ENCODE measurements at regions of chr2 and their contacts with region 1.

Region 1: GRCh38 chr2:69559442-69560146 is 83.9 kb downstream of the AAK1 start:
- DNase-seq: no peak
- H3K4me3 Mint-ChIP-seq: no peak overlapping the region
- H3K27ac Mint-ChIP-seq: no peak overlapping the region
- H3K4me1 Mint-ChIP-seq: peaks cover 77% of the 10 kb centered on the region
- H3K27me3 Mint-ChIP-seq: no peaks in the 10 kb centered on the region

Region 2: DNA sequence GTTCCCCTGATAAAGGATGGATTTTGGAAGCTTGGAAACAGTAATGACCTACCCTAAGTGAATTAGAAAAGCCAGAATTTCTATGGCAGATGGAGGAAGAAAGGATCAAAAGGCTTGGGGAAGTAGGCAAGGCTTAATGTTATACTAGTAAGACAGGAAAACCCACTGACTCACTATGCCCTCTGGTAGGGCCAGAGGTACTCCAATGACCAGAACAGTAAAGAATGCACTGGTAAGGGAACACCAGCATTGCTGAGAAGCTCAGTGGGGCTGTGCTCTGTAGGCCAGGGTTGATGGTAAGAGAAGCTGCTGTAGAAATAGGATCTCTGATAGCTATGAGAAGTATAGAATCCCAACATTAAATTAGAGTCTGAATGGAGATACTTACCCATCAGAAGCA is 298.9 kb before region 1 on chr2:
- CTCF ChIA-PET with region 1: no interaction called
- POLR2A ChIA-PET with region 1: no interaction called
- intact Hi-C with region 1: no loop called
- DNase-seq: no peak
- H3K4me3 Mint-ChIP-seq: no peak overlapping the region
- H3K27ac Mint-ChIP-seq: no peak overlapping the region
- H3K4me1 Mint-ChIP-seq: no peaks in the 10 kb centered on the region
- H3K27me3 Mint-ChIP-seq: peaks cover 25% of the 10 kb centered on the region

Region 3: GRCh38 chr2:69717861-69718273 is 158.3 kb after region 1 on chr2:
- CTCF ChIA-PET with region 1: interaction called, 52 read pairs
- POLR2A ChIA-PET with region 1: no interaction called
- intact Hi-C with region 1: loop called (anchors 1 kb)
- DNase-seq: no peak
- H3K4me3 Mint-ChIP-seq: no peak overlapping the region
- H3K27ac Mint-ChIP-seq: no peak overlapping the region
- H3K4me1 Mint-ChIP-seq: peaks cover 14% of the 10 kb centered on the region
- H3K27me3 Mint-ChIP-seq: no peaks in the 10 kb centered on the region